Activated CD4-positive, alpha-beta T cell treated with anti-CD3 and anti-CD28 coated beads for 36 hours (primary cell): ENCODE measurements at regions of chr11 and their contacts with region 1.

Region 1: DNA sequence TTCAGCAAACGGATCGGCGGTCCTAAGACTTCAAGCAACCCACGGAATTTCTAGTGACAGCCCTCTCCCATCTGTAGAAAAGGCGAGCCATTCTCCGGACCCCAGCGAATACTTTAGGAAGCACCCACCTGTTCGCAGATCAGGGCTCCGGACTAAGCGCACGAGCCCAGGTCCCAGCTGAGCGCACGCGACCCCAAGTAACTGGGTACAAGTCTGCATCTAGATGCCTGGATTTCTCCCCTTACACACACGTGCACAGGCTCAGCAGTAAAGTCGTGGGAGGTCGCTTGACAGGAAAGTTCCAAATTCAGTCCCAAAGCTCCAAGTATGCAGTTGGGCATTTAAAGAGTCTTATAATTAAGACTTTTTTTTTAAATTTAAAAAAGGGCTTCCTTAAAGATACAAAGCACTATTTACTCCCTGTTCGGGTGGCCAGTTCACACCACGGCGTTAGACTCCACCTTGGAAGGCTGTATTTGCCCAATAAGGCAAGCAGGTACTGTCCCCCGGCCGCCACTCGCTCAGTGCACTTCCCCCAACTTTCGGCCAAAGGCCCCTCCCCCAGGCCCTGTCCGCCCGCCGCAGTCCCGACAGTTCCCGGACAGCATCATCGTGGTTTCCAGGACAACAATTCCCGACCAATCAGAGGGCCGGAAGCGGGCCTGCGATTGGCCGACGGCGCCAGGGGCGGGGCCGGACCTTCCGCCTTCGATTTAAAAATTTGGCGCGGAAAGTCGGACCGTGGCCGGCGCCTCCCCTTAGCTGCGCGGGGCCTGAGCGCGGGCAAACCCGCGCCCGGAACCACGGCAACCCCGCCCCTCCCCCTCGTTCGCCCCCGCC is at the start of gene E2F8:
- DNase-seq: peak; percentile 94
- ATAC-seq: peak; percentile 82
- H3K4me3 Mint-ChIP-seq: peak within 1 kb of the TSS; percentile 89
- H3K27ac Mint-ChIP-seq: peak within 1 kb of the TSS; percentile 60
- H3K4me1 Mint-ChIP-seq: peaks cover 14% of the 10 kb centered on the region
- H3K27me3 Mint-ChIP-seq: peaks cover 31% of the 10 kb centered on the region
- total RNA-seq, gene E2F8: 18.0 to 22.2 TPM

Region 2: DNA sequence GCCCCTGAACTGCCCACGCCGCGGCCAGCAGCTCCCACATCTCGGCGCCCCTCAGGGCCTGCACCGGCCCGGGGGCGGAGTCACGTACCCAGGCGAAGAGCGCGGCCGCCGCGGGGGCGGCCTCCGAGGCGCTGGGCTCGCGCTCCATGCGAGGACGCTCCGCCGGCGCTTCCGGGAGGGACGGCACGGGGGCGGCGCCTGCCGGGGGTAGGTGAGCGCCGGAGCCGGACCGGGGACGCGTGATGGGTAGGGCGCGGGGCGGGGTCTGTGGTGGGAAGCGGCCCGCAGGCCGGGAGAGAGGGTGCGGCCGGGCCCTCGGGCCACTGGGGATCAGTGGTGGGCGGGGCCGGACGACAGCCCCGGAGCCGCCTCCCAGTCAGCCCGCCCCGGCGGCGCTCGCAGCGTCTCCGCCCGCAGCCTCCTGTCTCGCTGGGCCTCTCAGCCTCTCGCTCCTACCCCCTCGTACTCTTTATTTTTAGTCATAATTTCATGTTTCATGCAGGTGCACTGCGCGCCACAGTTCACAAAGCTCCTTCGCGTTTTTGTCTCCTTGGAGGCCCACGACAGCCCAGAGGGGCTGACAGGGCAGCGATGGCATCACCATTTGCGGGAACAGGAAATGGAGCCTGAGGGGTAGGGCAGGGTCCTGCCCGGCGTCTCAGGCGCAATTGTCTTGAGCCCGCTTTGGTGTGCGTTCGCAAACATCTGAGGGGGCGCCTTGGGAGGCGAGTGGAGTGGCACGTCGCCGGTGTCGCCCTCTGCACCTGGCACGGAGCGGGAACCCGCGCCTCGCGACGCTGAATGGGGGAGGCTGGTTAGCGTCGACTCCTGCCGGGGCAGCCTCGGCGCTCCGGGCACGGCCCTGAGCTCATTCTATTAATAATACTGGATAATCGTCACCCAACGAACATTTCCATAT is 1227.5 kb before region 1 on chr11 and contains the start of gene SERGEF:
- CTCF ChIA-PET with region 1: no interaction called
- POLR2A ChIA-PET with region 1: no interaction called
- intact Hi-C with region 1: loop called in 1 of 2 experiments (anchors 2 kb)
- DNase-seq: peak; percentile 96
- ATAC-seq: peak; percentile 93
- H3K4me3 Mint-ChIP-seq: peak within 1 kb of the TSS; percentile 85
- H3K27ac Mint-ChIP-seq: peak within 1 kb of the TSS; percentile 98
- H3K4me1 Mint-ChIP-seq: peaks cover 39% of the 10 kb centered on the region
- H3K27me3 Mint-ChIP-seq: no peaks in the 10 kb centered on the region
- total RNA-seq, gene SERGEF: 47.5 to 57.5 TPM

Region 3: DNA sequence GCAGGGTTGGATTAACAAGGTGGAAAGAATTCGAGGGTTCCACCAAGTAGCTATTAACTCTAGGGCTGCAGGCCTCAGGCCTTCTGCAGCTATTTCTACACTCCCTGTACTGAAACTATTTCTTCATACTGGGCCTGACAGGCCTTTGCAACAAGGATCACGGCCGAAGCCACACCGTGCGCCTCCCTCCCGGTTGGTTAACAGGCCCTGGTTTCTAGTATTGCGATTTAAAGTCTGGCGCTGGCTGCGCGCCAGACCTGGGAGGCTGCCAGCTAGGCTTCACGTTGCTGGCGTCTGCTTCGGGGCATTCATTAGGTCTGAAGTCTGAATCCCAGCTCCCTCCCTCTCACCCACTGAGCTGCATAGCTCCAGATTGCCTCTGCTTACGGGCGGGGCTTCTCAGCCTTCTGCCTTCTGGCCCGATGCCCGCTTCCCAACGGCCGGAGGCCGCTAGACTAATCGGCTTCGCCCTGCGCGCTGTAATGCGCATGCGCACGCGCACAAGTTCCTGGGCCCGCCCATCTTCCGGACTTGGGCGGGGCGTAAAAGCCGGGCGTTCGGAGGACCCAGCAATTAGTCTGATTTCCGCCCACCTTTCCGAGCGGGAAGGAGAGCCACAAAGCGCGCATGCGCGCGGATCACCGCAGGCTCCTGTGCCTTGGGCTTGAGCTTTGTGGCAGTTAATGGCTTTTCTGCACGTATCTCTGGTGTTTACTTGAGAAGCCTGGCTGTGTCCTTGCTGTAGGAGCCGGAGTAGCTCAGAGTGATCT is 844.7 kb before region 1 on chr11:
- CTCF ChIA-PET with region 1: no interaction called
- POLR2A ChIA-PET with region 1: no interaction called
- intact Hi-C with region 1: loop called in 1 of 2 experiments (anchors 5 kb)
- DNase-seq: peak; percentile 96
- ATAC-seq: peak; percentile 65
- H3K4me3 Mint-ChIP-seq: peak overlapping the region; percentile 97
- H3K27ac Mint-ChIP-seq: peak overlapping the region; percentile 99
- H3K4me1 Mint-ChIP-seq: peaks cover 65% of the 10 kb centered on the region
- H3K27me3 Mint-ChIP-seq: no peaks in the 10 kb centered on the region

Region 4: GRCh38 chr11:18698341-18699268 is 542.0 kb before region 1 on chr11 and contains the start of gene TMEM86A:
- CTCF ChIA-PET with region 1: no interaction called
- POLR2A ChIA-PET with region 1: no interaction called
- intact Hi-C with region 1: loop called in 1 of 2 experiments (anchors 10 kb)
- DNase-seq: peak; percentile 93
- ATAC-seq: peak; percentile 96
- H3K4me3 Mint-ChIP-seq: peak within 1 kb of the TSS; percentile 72
- H3K27ac Mint-ChIP-seq: peak within 1 kb of the TSS; percentile 69
- H3K4me1 Mint-ChIP-seq: peaks cover 13% of the 10 kb centered on the region
- H3K27me3 Mint-ChIP-seq: peaks cover 3% of the 10 kb centered on the region
- total RNA-seq, gene TMEM86A: 0.09 to 0.26 TPM

Region 5: GRCh38 chr11:19116971-19117750 is 123.5 kb before region 1 on chr11 and contains the start of gene ZDHHC13:
- CTCF ChIA-PET with region 1: no interaction called
- POLR2A ChIA-PET with region 1: no interaction called
- intact Hi-C with region 1: loop called (anchors 1 kb)
- DNase-seq: peak; percentile 97
- ATAC-seq: peak; percentile 99
- H3K4me3 Mint-ChIP-seq: peak within 1 kb of the TSS; percentile 89
- H3K27ac Mint-ChIP-seq: peak within 1 kb of the TSS; percentile 87
- H3K4me1 Mint-ChIP-seq: peaks cover 51% of the 10 kb centered on the region
- H3K27me3 Mint-ChIP-seq: no peaks in the 10 kb centered on the region
- total RNA-seq, gene ZDHHC13: 22.9 to 25.9 TPM

Region 6: GRCh38 chr11:19712281-19713220 is 471.9 kb after region 1 on chr11 and contains the start of gene NAV2:
- CTCF ChIA-PET with region 1: no interaction called
- POLR2A ChIA-PET with region 1: no interaction called
- intact Hi-C with region 1: loop called in 1 of 2 experiments (anchors 2 kb)
- DNase-seq: peak; percentile 86
- ATAC-seq: peak; percentile 98
- H3K4me3 Mint-ChIP-seq: peak within 1 kb of the TSS; percentile 77
- H3K27ac Mint-ChIP-seq: peak within 1 kb of the TSS; percentile 85
- H3K4me1 Mint-ChIP-seq: peaks cover 26% of the 10 kb centered on the region
- H3K27me3 Mint-ChIP-seq: peaks cover 39% of the 10 kb centered on the region
- total RNA-seq, gene NAV2: 0.54 to 0.55 TPM

Region 7: GRCh38 chr11:20387241-20388095 is 1146.8 kb after region 1 on chr11 and contains the start of gene PRMT3:
- CTCF ChIA-PET with region 1: no interaction called
- POLR2A ChIA-PET with region 1: no interaction called
- intact Hi-C with region 1: loop called in 1 of 2 experiments (anchors 1 kb)
- DNase-seq: peak; percentile 98
- ATAC-seq: peak; percentile 90
- H3K4me3 Mint-ChIP-seq: peak within 1 kb of the TSS; percentile 98
- H3K27ac Mint-ChIP-seq: peak within 1 kb of the TSS; percentile 99
- H3K4me1 Mint-ChIP-seq: peaks cover 27% of the 10 kb centered on the region
- H3K27me3 Mint-ChIP-seq: no peaks in the 10 kb centered on the region
- total RNA-seq, gene PRMT3: 36.5 to 39.0 TPM